ENCODE measurements at regions of chr7 and their contacts with region 1.

Region 1: DNA sequence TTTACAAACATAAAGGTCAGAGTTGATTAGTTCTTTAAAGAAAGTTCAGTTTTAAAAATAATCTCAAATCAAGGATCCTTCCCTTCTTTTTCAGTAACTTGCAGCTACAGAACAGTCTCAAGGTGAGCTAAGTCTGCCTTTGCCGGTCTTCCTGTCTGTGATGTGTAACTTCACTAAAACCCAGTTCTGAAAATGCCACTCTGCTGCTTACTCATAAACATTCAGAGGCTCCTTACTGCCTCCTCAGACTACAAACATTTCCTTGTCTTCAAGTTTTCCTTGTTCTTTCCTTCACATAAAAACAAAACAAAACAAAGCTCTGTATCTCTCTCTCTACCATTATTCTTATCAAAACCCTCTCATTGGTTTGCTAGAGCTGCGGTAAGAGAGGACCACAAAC is 128.7 kb downstream of the ETV1 start:
- DNase-seq: no peak
- ATAC-seq: no peak
- H3K4me3 ChIP-seq: no peak overlapping the region
- H3K27ac ChIP-seq: no peak overlapping the region
- H3K4me1 ChIP-seq: no peaks in the 10 kb centered on the region
- H3K27me3 ChIP-seq: no peaks in the 10 kb centered on the region

Region 2: GRCh38 chr7:13945670-13946069 is 84.9 kb after region 1 on chr7:
- intact Hi-C with region 1: loop called in 1 of 2 experiments (anchors 5 kb)
- DNase-seq: no peak
- ATAC-seq: no peak
- H3K4me3 ChIP-seq: no peak overlapping the region
- H3K27ac ChIP-seq: no peak overlapping the region
- H3K4me1 ChIP-seq: no peaks in the 10 kb centered on the region
- H3K27me3 ChIP-seq: no peaks in the 10 kb centered on the region